ENCODE measurements at regions of chr18 and their contacts with region 1.

Region 1: DNA sequence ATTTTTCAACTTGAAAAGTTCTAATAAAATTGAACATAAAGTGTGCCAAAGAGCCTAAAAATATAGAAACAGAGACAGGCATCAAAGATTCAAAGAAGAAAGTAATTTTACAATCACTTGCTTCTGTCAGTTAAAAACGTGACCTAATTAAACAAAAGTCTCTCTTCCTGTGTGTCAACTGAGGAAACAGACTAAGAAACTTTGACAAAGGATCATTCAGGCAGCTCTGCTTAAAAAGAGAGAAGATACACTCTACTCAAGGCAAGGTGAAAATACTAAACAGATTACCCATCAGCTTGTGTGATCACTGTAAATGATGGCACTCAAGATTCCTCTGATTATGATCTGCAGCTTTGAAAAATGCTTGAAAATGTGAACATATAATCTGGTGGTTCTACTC is 47.8 kb downstream of the DYM start:
- DNase-seq: no peak
- ATAC-seq: no peak
- H3K4me3 ChIP-seq: no peak overlapping the region
- H3K27ac ChIP-seq: no peak overlapping the region
- H3K4me1 ChIP-seq: no peaks in the 10 kb centered on the region
- H3K27me3 ChIP-seq: no peaks in the 10 kb centered on the region
- CTCF ChIP-seq: no peak

Region 2: DNA sequence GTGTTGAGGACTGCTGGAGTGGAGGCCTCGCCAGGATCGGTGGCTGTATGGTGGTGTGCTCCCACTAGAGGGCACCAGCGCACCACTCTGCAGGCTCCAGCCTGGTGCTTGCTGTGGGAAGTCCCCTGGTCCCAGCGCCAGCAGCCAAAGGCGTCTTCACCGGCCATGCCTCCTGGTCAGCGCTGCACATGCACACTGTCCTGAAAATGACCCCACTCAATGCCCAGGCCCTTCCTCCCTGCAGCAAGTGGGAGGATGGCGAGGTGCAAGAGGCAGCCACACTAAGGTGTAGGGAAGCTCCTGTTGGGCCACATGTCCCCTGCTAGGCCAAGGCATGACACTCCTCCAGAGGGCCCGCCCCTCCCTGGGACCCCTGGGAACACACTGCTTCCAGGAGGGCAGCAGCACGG is 737.3 kb before region 1 on chr18:
- CTCF ChIA-PET with region 1: no interaction called
- POLR2A ChIA-PET with region 1: no interaction called
- intact Hi-C with region 1: loop called (anchors 10 kb)
- DNase-seq: peak; percentile 67
- ATAC-seq: peak; percentile 97
- H3K4me3 ChIP-seq: no peak overlapping the region
- H3K27ac ChIP-seq: no peak overlapping the region
- H3K4me1 ChIP-seq: no peaks in the 10 kb centered on the region
- H3K27me3 ChIP-seq: no peaks in the 10 kb centered on the region
- CTCF ChIP-seq: peak; percentile 66

Region 3: GRCh38 chr18:49170925-49171505 is 241.7 kb before region 1 on chr18:
- CTCF ChIA-PET with region 1: interaction called, 16 read pairs
- POLR2A ChIA-PET with region 1: no interaction called
- intact Hi-C with region 1: loop called (anchors 10 kb)
- DNase-seq: no peak
- ATAC-seq: no peak
- H3K4me3 ChIP-seq: no peak overlapping the region
- H3K27ac ChIP-seq: no peak overlapping the region
- H3K4me1 ChIP-seq: no peaks in the 10 kb centered on the region
- H3K27me3 ChIP-seq: no peaks in the 10 kb centered on the region
- CTCF ChIP-seq: no peak

Region 4: GRCh38 chr18:49178736-49179135 is 233.9 kb before region 1 on chr18:
- CTCF ChIA-PET with region 1: no interaction called
- POLR2A ChIA-PET with region 1: no interaction called
- intact Hi-C with region 1: loop called (anchors 10 kb)
- DNase-seq: peak; percentile 12
- ATAC-seq: no peak
- H3K4me3 ChIP-seq: no peak overlapping the region
- H3K27ac ChIP-seq: no peak overlapping the region
- H3K4me1 ChIP-seq: peaks cover 19% of the 10 kb centered on the region
- H3K27me3 ChIP-seq: no peaks in the 10 kb centered on the region
- CTCF ChIP-seq: peak; percentile 64

Region 5: GRCh38 chr18:49249521-49249920 is 163.2 kb before region 1 on chr18:
- CTCF ChIA-PET with region 1: no interaction called
- POLR2A ChIA-PET with region 1: no interaction called
- intact Hi-C with region 1: loop called (anchors 2 kb)
- DNase-seq: peak; percentile 66
- ATAC-seq: peak; percentile 90
- H3K4me3 ChIP-seq: no peak overlapping the region
- H3K27ac ChIP-seq: peak overlapping the region; percentile 58
- H3K4me1 ChIP-seq: peaks cover 33% of the 10 kb centered on the region
- H3K27me3 ChIP-seq: no peaks in the 10 kb centered on the region
- CTCF ChIP-seq: no peak

Region 6: DNA sequence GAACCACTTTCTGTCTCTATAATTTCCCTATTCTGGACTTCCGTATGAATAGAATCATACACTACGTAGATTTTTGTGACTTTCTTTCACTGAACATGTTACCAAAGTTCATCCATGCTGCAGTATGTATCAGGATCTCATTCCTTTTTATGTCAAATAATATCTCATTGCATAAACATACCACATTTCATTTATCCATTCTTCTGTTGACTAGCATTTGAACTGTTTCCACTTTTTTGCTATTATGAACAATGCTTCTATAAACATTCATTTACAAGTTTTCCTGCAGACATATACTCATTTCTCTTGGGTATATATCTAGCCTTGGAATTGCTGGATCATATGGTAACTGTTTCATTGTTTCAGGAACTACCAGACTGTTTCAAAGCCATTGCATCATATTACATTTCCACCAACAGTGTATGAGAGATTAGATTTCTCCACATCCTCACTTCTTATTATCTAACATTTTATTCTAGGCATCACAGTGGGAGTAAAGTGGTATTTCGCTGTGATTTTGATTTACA is 138.4 kb before region 1 on chr18:
- CTCF ChIA-PET with region 1: no interaction called
- POLR2A ChIA-PET with region 1: no interaction called
- intact Hi-C with region 1: loop called (anchors 5 kb)
- DNase-seq: no peak
- ATAC-seq: peak; percentile 49; the same call in 1 of the 2 replicates
- H3K4me3 ChIP-seq: no peak overlapping the region
- H3K27ac ChIP-seq: no peak overlapping the region
- H3K4me1 ChIP-seq: peaks cover 11% of the 10 kb centered on the region
- H3K27me3 ChIP-seq: no peaks in the 10 kb centered on the region
- CTCF ChIP-seq: no peak